Sigmoid colon (tissue), 7 donors: ENCODE measurements at regions of chr12 and their contacts with region 1.

Region 1: GRCh38 chr12:25250744-25251730 is at the start of gene KRAS:
- DNase-seq: peak; percentile 99
- H3K4me3 ChIP-seq: peak within 1 kb of the TSS; percentile 68 to 100 (median 87)
- H3K27ac ChIP-seq: peak within 1 kb of the TSS; percentile 91 to 99 (median 96)
- H3K4me1 ChIP-seq: peaks cover 0 to 31% (median 18%) of the 10 kb centered on the region in 4 donors
- H3K27me3 ChIP-seq: no peaks in the 10 kb centered on the region
- CTCF ChIP-seq: no peak
- EP300 ChIP-seq: peak in 1 of 4 donors; percentile 5
- POLR2A ChIP-seq: peak; percentile 46 to 48
- total RNA-seq, gene KRAS: 19.4 to 24.0 (median 22.5) TPM

Region 2: GRCh38 chr12:25213338-25213737 is 37.7 kb before region 1 on chr12:
- intact Hi-C with region 1: no loop called
- DNase-seq: no peak
- H3K4me3 ChIP-seq: no peak overlapping the region
- H3K27ac ChIP-seq: no peak overlapping the region
- H3K4me1 ChIP-seq: no peaks in the 10 kb centered on the region
- H3K27me3 ChIP-seq: no peaks in the 10 kb centered on the region
- CTCF ChIP-seq: no peak
- EP300 ChIP-seq: no peak
- POLR2A ChIP-seq: no peak

Region 3: GRCh38 chr12:25276199-25276937 is 25.3 kb after region 1 on chr12:
- intact Hi-C with region 1: loop called (anchors 2 kb)
- DNase-seq: peak; percentile 74
- H3K4me3 ChIP-seq: no peak overlapping the region
- H3K27ac ChIP-seq: peak overlapping the region in 3 of 4 donors; percentile 28 to 68 (median 49)
- H3K4me1 ChIP-seq: peaks cover 0 to 17% (median 8%) of the 10 kb centered on the region in 4 donors
- H3K27me3 ChIP-seq: no peaks in the 10 kb centered on the region
- CTCF ChIP-seq: no peak
- EP300 ChIP-seq: no peak
- POLR2A ChIP-seq: no peak

Region 4: DNA sequence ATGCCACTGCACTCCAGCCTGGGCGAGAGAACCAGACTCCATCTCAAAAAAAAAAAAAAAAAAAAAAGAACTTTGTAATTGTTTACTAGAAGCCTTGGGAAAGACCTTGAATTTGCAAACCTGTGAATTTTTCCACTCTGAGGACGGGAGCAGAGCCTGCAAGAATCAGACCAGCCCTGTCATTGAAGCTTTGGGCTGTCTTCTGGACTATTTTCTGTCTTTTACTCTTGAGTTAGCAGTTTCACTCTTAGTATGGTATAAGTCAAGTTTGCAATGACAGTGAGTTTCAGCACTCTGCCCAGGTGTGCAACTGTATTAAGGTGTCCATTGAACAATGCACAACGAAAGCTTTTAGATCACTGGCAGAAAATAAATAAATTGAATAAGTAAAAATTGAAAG is 81.1 kb after region 1 on chr12:
- intact Hi-C with region 1: loop called (anchors 10 kb)
- DNase-seq: no peak
- H3K4me3 ChIP-seq: no peak overlapping the region
- H3K27ac ChIP-seq: no peak overlapping the region
- H3K4me1 ChIP-seq: peaks cover 0 to 9% (median 2%) of the 10 kb centered on the region in 4 donors
- H3K27me3 ChIP-seq: no peaks in the 10 kb centered on the region
- CTCF ChIP-seq: no peak
- EP300 ChIP-seq: no peak
- POLR2A ChIP-seq: no peak